ENCODE measurements at regions of chr15 and their contacts with region 1.

Region 1: DNA sequence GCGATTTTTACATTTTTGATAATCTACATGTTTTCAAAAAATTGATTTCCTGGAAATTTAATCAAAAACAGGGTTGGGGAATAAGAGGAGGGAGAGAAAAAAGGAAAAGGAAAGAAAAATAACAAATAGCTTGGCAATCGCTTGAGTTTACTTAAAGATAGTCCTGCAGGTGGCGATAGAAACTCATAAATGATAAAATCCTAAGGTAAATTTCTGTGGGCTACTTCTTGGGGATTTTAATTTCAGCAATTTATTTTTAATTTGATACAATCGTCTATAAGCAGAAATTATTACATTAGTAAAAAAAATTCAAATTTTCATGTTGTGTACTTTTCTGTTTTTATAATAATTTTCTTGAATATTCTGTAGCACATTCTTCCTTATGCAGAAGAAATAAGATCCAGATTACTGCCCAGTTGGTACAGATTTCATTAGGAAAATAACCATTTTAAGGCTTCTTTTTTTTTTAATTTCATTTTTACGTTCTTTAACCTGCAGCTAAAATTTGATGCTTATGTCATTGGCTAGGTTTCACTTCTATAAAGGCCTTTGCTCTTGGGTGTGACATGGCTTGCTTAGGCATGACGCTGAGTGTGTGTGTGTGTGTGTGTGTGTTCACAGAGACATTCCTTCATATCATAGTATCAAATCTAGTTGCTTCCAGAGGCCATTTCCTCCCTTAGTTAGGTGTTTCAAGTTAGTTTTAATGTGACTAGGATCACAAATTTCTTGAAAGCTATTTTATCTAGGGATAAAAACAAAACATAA is 181.8 kb downstream of the MCTP2 start:
- DNase-seq: no peak
- H3K4me3 ChIP-seq: peak overlapping the region in 1 of 2 experiments; percentile 41; a peak in 1 of 4 replicates
- H3K27ac ChIP-seq: no peak overlapping the region
- H3K4me1 ChIP-seq: peaks cover 0 to 23% of the 10 kb centered on the region in 2 experiments; a peak in 2 of 4 replicates
- H3K27me3 ChIP-seq: no peaks in the 10 kb centered on the region
- CTCF ChIP-seq: peak; percentile 47
- EP300 ChIP-seq: no peak
- RAD21 ChIP-seq: peak; percentile 73

Region 2: GRCh38 chr15:94582369-94582768 is 169.2 kb after region 1 on chr15:
- CTCF ChIA-PET with region 1: interaction called, 13 read pairs
- POLR2A ChIA-PET with region 1: no interaction called
- DNase-seq: peak; percentile 12
- H3K4me3 ChIP-seq: no peak overlapping the region; a peak in 1 of 4 replicates
- H3K27ac ChIP-seq: no peak overlapping the region
- H3K4me1 ChIP-seq: peaks cover 0 to 11% of the 10 kb centered on the region in 2 experiments; a peak in 1 of 4 replicates
- H3K27me3 ChIP-seq: no peaks in the 10 kb centered on the region
- CTCF ChIP-seq: no peak
- EP300 ChIP-seq: no peak
- RAD21 ChIP-seq: peak; percentile 58

Region 3: GRCh38 chr15:94670438-94671034 is 257.4 kb after region 1 on chr15:
- CTCF ChIA-PET with region 1: interaction called, 36 read pairs
- POLR2A ChIA-PET with region 1: no interaction called
- DNase-seq: peak; percentile 57
- H3K4me3 ChIP-seq: peak overlapping the region in 1 of 2 experiments; percentile 42; a peak in 1 of 4 replicates
- H3K27ac ChIP-seq: no peak overlapping the region
- H3K4me1 ChIP-seq: no peaks in the 10 kb centered on the region
- H3K27me3 ChIP-seq: no peaks in the 10 kb centered on the region
- CTCF ChIP-seq: peak; percentile 57
- EP300 ChIP-seq: no peak
- RAD21 ChIP-seq: peak; percentile 86